Endothelial cell of umbilical vein (primary cell): ENCODE measurements at regions of chr19 and their contacts with region 1.

Region 1: DNA sequence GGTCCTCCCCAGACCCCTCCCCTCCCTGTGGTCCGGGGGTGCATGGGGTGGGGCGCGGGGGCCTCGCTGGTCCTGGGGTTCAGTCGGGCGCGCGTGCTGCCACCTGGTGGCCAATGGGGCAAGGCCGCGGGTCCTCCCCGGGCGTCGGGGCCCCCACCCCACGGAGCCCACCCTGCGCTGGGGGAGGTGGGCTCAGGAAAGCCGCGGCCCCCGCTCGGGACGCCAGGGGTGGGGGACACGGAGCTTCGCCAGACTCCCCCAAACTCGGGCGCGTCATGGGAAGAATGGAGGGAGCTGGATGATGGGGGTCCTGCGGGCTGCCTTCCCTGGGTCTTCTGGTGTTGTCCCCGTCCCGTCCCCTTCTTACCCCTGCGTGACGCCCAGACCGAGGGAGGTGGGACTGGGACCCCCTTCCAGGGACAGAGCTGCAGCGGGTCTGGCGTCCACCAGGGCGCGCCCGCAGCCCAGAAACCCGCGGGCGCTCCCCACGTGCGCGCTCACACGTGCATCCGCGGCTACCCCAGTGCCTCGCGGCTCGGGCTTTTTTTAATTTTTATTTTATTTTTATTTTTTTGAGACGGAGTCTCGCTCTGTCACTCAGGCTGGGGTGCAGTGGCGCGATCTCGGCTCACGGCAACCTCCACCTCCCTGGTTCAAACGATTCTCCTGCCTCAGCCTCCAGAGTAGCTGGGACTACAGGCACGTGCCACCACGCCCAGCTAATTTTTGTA is 19.8 kb upstream of the TCF3 start:
- DNase-seq: no peak
- H3K4me3 ChIP-seq: no peak overlapping the region
- H3K27ac ChIP-seq: no peak overlapping the region
- H3K4me1 ChIP-seq: no peaks in the 10 kb centered on the region
- H3K27me3 ChIP-seq: peaks cover 24 to 43% of the 10 kb centered on the region in 2 experiments
- CTCF ChIP-seq: peak; percentile 57 to 71
- POLR2A ChIP-seq: no peak

Region 2: DNA sequence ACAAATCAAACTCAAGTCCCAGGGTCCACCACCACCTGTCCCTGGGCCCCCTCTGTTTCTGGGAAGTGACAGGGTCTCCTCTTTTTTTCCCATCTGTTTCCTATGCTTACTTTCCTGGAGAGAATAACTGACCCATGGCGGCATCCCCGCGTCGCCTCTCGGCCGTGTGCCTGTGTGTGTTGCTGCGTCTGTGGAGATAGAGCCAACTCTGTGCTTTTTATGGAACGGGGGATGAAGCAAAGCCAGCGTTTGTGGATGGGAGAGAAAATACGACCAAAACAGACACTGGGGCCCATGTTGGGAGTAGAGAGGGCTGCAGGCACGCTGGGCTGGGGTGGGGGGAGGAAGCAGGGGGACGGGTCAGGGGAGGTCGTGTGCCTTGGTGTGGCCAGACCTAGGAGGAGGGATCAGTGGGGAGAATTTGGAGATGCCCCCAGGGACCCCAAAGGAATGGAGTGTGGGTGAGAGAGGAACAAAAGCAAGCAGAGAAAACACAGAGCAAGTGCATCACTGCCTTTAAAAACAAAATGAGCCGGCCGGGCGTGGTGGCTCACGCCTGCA is 131.8 kb before region 1 on chr19:
- CTCF ChIA-PET with region 1: interaction called, 177 read pairs
- POLR2A ChIA-PET with region 1: no interaction called
- dilution Hi-C with region 1: no loop called
- intact Hi-C with region 1: no loop called
- DNase-seq: no peak
- H3K4me3 ChIP-seq: no peak overlapping the region
- H3K27ac ChIP-seq: no peak overlapping the region
- H3K4me1 ChIP-seq: no peaks in the 10 kb centered on the region
- H3K27me3 ChIP-seq: no peaks in the 10 kb centered on the region
- CTCF ChIP-seq: no peak
- POLR2A ChIP-seq: no peak

Region 3: GRCh38 chr19:1605236-1606137 is 66.7 kb before region 1 on chr19 and contains the start of gene UQCR11:
- CTCF ChIA-PET with region 1: interaction called, 20 read pairs
- POLR2A ChIA-PET with region 1: no interaction called
- dilution Hi-C with region 1: no loop called
- intact Hi-C with region 1: loop called (anchors 1 kb)
- DNase-seq: peak; percentile 95
- H3K4me3 ChIP-seq: peak within 1 kb of the TSS; percentile 87 to 99 (median 95)
- H3K27ac ChIP-seq: peak within 1 kb of the TSS; percentile 51
- H3K4me1 ChIP-seq: peaks cover 9% of the 10 kb centered on the region
- H3K27me3 ChIP-seq: no peaks in the 10 kb centered on the region
- CTCF ChIP-seq: peak; percentile 32 to 60
- POLR2A ChIP-seq: peak; percentile 93
- total RNA-seq, gene UQCR11: 210 and 223 TPM in 2 replicates

Region 4: GRCh38 chr19:1661995-1662394 is 10.2 kb before region 1 on chr19:
- CTCF ChIA-PET with region 1: interaction called, 10 read pairs
- POLR2A ChIA-PET with region 1: no interaction called
- dilution Hi-C with region 1: no loop called
- intact Hi-C with region 1: no loop called
- DNase-seq: no peak
- H3K4me3 ChIP-seq: no peak overlapping the region
- H3K27ac ChIP-seq: no peak overlapping the region
- H3K4me1 ChIP-seq: no peaks in the 10 kb centered on the region
- H3K27me3 ChIP-seq: no peaks in the 10 kb centered on the region
- CTCF ChIP-seq: no peak
- POLR2A ChIP-seq: no peak

Region 5: GRCh38 chr19:1725100-1726064 is 53.2 kb after region 1 on chr19:
- CTCF ChIA-PET with region 1: no interaction called
- POLR2A ChIA-PET with region 1: no interaction called
- dilution Hi-C with region 1: no loop called
- intact Hi-C with region 1: no loop called
- DNase-seq: peak; percentile 36
- H3K4me3 ChIP-seq: peak overlapping the region in 2 of 3 experiments; percentile 26 to 52
- H3K27ac ChIP-seq: no peak overlapping the region
- H3K4me1 ChIP-seq: peaks cover 3% of the 10 kb centered on the region
- H3K27me3 ChIP-seq: peaks cover 3 to 5% of the 10 kb centered on the region in 2 experiments
- CTCF ChIP-seq: no peak
- POLR2A ChIP-seq: no peak

Region 6: GRCh38 chr19:1767464-1767933 is 95.3 kb after region 1 on chr19:
- CTCF ChIA-PET with region 1: interaction called, 106 read pairs
- POLR2A ChIA-PET with region 1: no interaction called
- dilution Hi-C with region 1: no loop called
- intact Hi-C with region 1: loop called (anchors 1 kb)
- DNase-seq: peak; percentile 24
- H3K4me3 ChIP-seq: no peak overlapping the region
- H3K27ac ChIP-seq: no peak overlapping the region
- H3K4me1 ChIP-seq: no peaks in the 10 kb centered on the region
- H3K27me3 ChIP-seq: peaks cover 43% of the 10 kb centered on the region in 2 experiments
- CTCF ChIP-seq: peak; percentile 88 to 95
- POLR2A ChIP-seq: no peak

Region 7: GRCh38 chr19:1789261-1790041 is 117.2 kb after region 1 on chr19:
- CTCF ChIA-PET with region 1: interaction called, 75 read pairs
- POLR2A ChIA-PET with region 1: no interaction called
- dilution Hi-C with region 1: no loop called
- intact Hi-C with region 1: no loop called
- DNase-seq: no peak
- H3K4me3 ChIP-seq: no peak overlapping the region
- H3K27ac ChIP-seq: no peak overlapping the region
- H3K4me1 ChIP-seq: no peaks in the 10 kb centered on the region
- H3K27me3 ChIP-seq: no peaks in the 10 kb centered on the region
- CTCF ChIP-seq: no peak
- POLR2A ChIP-seq: no peak

Region 8: GRCh38 chr19:1825909-1826556 is 153.8 kb after region 1 on chr19:
- CTCF ChIA-PET with region 1: interaction called, 54 read pairs
- POLR2A ChIA-PET with region 1: no interaction called
- dilution Hi-C with region 1: no loop called
- intact Hi-C with region 1: no loop called
- DNase-seq: peak; percentile 49
- H3K4me3 ChIP-seq: no peak overlapping the region
- H3K27ac ChIP-seq: no peak overlapping the region
- H3K4me1 ChIP-seq: no peaks in the 10 kb centered on the region
- H3K27me3 ChIP-seq: no peaks in the 10 kb centered on the region
- CTCF ChIP-seq: peak; percentile 88 to 91
- POLR2A ChIP-seq: no peak